ENCODE measurements at regions of chr7 and their contacts with region 1.

Region 1: DNA sequence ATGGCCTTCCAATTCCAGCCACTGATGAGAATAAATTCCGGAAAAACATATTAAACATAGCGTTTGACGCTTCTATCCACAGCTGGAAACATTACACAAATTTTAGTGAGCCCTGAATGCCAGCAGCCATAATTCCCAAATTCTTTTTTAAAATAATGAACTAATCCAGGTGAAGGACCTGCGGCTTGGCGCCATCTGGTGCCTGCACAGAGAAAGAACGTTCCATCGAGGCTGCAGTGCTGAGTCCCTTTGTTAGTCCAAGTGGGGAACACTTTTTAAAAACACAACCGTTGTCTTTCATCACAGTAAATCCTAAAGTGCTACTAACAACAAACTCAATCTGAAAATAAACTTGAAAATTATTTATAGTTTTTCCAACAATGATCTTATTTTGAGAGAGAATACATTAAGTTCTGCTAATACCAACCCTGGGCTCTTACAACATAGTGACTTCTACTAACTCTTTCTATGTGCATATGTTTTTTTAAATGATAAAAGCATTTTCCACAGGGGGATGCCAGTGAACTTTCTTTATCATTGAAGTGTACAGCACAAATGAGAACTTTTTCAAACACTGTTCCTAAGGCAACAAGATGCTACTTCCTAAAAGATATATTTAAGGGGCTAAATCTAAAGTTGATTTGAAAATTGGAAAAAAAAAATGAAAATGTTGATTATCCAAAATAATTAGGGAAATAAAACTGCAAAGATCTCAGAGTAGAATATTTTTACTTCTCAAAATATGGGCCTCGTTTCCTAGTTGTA is 166.9 kb upstream of the RNF32 start:
- DNase-seq: no peak
- H3K4me3 ChIP-seq: no peak overlapping the region
- H3K27ac ChIP-seq: no peak overlapping the region
- H3K4me1 ChIP-seq: peaks cover 0 to 10% (median 6%) of the 10 kb centered on the region in 4 donors
- H3K27me3 ChIP-seq: no peaks in the 10 kb centered on the region
- CTCF ChIP-seq: peak in 3 of 4 experiments; percentile 14 to 44 (median 19)
- EP300 ChIP-seq: no peak
- POLR2A ChIP-seq: no peak

Region 2: GRCh38 chr7:155804897-155805825 is 668.5 kb before region 1 on chr7:
- intact Hi-C with region 1: loop called (anchors 10 kb)
- DNase-seq: no peak
- H3K4me3 ChIP-seq: peak overlapping the region in 3 of 4 donors; percentile 24 to 39 (median 37)
- H3K27ac ChIP-seq: no peak overlapping the region
- H3K4me1 ChIP-seq: peaks cover 0 to 66% (median 60%) of the 10 kb centered on the region in 4 donors
- H3K27me3 ChIP-seq: peaks cover 65 to 100% (median 97%) of the 10 kb centered on the region in 3 donors
- CTCF ChIP-seq: peak in 1 of 4 experiments; percentile 68
- EP300 ChIP-seq: no peak
- POLR2A ChIP-seq: no peak

Measured in sigmoid colon (tissue), 7 donors.